ENCODE measurements at regions of chr1 and their contacts with region 1.

Region 1: GRCh38 chr1:9629445-9630201 is 21.9 kb upstream of the PIK3CD start:
- DNase-seq: peak; percentile 90
- ATAC-seq: peak; percentile 51
- H3K4me3 ChIP-seq: peak overlapping the region; percentile 51 to 85 (median 70)
- H3K4me3 Mint-ChIP-seq: peak overlapping the region; percentile 86
- H3K27ac ChIP-seq: peak overlapping the region; percentile 79 to 88
- H3K27ac Mint-ChIP-seq: peak overlapping the region; percentile 97
- H3K4me1 ChIP-seq: peaks cover 37 to 70% of the 10 kb centered on the region in 2 donors
- H3K4me1 Mint-ChIP-seq: peaks cover 69% of the 10 kb centered on the region
- H3K27me3 ChIP-seq: no peaks in the 10 kb centered on the region
- H3K27me3 Mint-ChIP-seq: no peaks in the 10 kb centered on the region
- CTCF ChIP-seq: no peak

Region 2: GRCh38 chr1:9486466-9487140 is 143.0 kb before region 1 on chr1:
- CTCF ChIA-PET with region 1: no interaction called
- POLR2A ChIA-PET with region 1: no interaction called
- intact Hi-C with region 1: no loop called
- DNase-seq: no peak
- ATAC-seq: no peak
- H3K4me3 ChIP-seq: no peak overlapping the region
- H3K4me3 Mint-ChIP-seq: no peak overlapping the region
- H3K27ac ChIP-seq: no peak overlapping the region
- H3K27ac Mint-ChIP-seq: no peak overlapping the region
- H3K4me1 ChIP-seq: no peaks in the 10 kb centered on the region
- H3K4me1 Mint-ChIP-seq: no peaks in the 10 kb centered on the region
- H3K27me3 ChIP-seq: peaks cover 0 to 9% (median 0%) of the 10 kb centered on the region in 4 experiments
- H3K27me3 Mint-ChIP-seq: peaks cover 22% of the 10 kb centered on the region
- CTCF ChIP-seq: no peak

Region 3: DNA sequence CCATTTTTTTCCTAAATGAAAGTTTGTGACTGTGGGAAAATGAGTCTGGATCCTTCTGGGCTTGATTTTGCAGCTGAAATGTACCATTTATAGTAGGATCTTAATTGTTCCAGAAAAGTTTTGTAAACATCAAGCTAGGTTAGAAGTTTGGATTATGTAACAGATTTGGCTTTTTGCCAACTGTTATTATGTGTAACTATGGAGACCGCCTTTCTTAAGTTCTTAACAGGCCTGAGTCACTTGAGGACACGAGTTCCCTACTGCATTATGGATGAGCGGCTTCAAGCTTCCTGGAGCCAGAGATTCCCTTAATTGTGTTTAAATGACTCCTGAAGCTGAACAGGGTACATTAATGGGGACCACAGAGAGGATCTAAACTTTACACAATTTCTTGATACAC is 68.2 kb before region 1 on chr1:
- CTCF ChIA-PET with region 1: no interaction called
- POLR2A ChIA-PET with region 1: no interaction called
- intact Hi-C with region 1: no loop called
- DNase-seq: no peak
- ATAC-seq: no peak
- H3K4me3 ChIP-seq: no peak overlapping the region
- H3K4me3 Mint-ChIP-seq: no peak overlapping the region
- H3K27ac ChIP-seq: no peak overlapping the region
- H3K27ac Mint-ChIP-seq: no peak overlapping the region
- H3K4me1 ChIP-seq: no peaks in the 10 kb centered on the region
- H3K4me1 Mint-ChIP-seq: peaks cover 6% of the 10 kb centered on the region
- H3K27me3 ChIP-seq: no peaks in the 10 kb centered on the region
- H3K27me3 Mint-ChIP-seq: no peaks in the 10 kb centered on the region
- CTCF ChIP-seq: no peak

Region 4: GRCh38 chr1:9588551-9589143 is 41.0 kb before region 1 on chr1 and contains the start of gene TMEM201:
- CTCF ChIA-PET with region 1: interaction called, 4 read pairs
- POLR2A ChIA-PET with region 1: interaction called, 5 read pairs
- intact Hi-C with region 1: loop called (anchors 2 kb)
- DNase-seq: peak; percentile 96
- ATAC-seq: peak; percentile 91
- H3K4me3 ChIP-seq: peak within 1 kb of the TSS; percentile 33 to 62 (median 58)
- H3K4me3 Mint-ChIP-seq: peak within 1 kb of the TSS; percentile 91
- H3K27ac ChIP-seq: peak within 1 kb of the TSS in 1 of 2 donors; percentile 6
- H3K27ac Mint-ChIP-seq: peak within 1 kb of the TSS; percentile 82
- H3K4me1 ChIP-seq: peaks cover 33 to 42% of the 10 kb centered on the region in 2 donors
- H3K4me1 Mint-ChIP-seq: peaks cover 38% of the 10 kb centered on the region
- H3K27me3 ChIP-seq: no peaks in the 10 kb centered on the region
- H3K27me3 Mint-ChIP-seq: no peaks in the 10 kb centered on the region
- CTCF ChIP-seq: peak; percentile 80
- total RNA-seq, gene TMEM201: 9.1 and 11.2 TPM in 2 replicates

Region 5: GRCh38 chr1:9651565-9652378 is 22.1 kb after region 1 on chr1 and contains the start of gene PIK3CD:
- CTCF ChIA-PET with region 1: interaction called, 231 read pairs
- POLR2A ChIA-PET with region 1: interaction called, 251 read pairs
- intact Hi-C with region 1: loop called (anchors 1 kb)
- DNase-seq: peak; percentile 68
- ATAC-seq: peak; percentile 22
- H3K4me3 ChIP-seq: peak within 1 kb of the TSS; percentile 57 to 96 (median 74)
- H3K4me3 Mint-ChIP-seq: peak within 1 kb of the TSS; percentile 98
- H3K27ac ChIP-seq: peak within 1 kb of the TSS; percentile 77 to 82
- H3K27ac Mint-ChIP-seq: peak within 1 kb of the TSS; percentile 99
- H3K4me1 ChIP-seq: peaks cover 39 to 57% of the 10 kb centered on the region in 2 donors
- H3K4me1 Mint-ChIP-seq: peaks cover 58% of the 10 kb centered on the region
- H3K27me3 ChIP-seq: no peaks in the 10 kb centered on the region
- H3K27me3 Mint-ChIP-seq: no peaks in the 10 kb centered on the region
- CTCF ChIP-seq: no peak
- total RNA-seq, gene PIK3CD: 222 and 223 TPM in 2 replicates

Region 6: GRCh38 chr1:9671377-9672140 is 41.9 kb after region 1 on chr1:
- CTCF ChIA-PET with region 1: interaction called, 29 read pairs
- POLR2A ChIA-PET with region 1: interaction called, 4 read pairs
- intact Hi-C with region 1: no loop called
- DNase-seq: no peak
- ATAC-seq: no peak
- H3K4me3 ChIP-seq: no peak overlapping the region
- H3K4me3 Mint-ChIP-seq: no peak overlapping the region
- H3K27ac ChIP-seq: peak overlapping the region in 1 of 2 donors; percentile 2
- H3K27ac Mint-ChIP-seq: peak overlapping the region; percentile 79
- H3K4me1 ChIP-seq: peaks cover 11 to 46% of the 10 kb centered on the region in 2 donors
- H3K4me1 Mint-ChIP-seq: peaks cover 46% of the 10 kb centered on the region
- H3K27me3 ChIP-seq: no peaks in the 10 kb centered on the region
- H3K27me3 Mint-ChIP-seq: no peaks in the 10 kb centered on the region
- CTCF ChIP-seq: no peak

Region 7: DNA sequence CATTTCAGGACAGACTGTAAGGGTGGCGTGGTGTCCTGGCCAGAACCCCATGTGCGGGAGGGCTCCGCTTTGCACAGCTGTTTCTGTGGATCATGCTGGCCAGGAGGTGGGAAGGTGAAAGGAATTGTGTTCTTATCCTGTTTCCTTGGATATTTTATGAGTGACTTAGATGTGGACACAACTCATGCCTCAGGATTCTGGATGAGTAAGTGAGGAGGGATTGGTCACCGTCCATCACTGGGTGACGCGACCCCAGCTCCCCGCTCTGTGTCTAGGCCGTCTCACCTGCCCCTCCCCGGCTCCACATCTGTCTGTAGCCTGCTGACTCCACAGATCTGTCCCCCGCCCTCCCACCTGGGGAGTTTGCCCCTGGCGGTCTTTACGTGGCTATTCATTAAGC is 70.7 kb after region 1 on chr1:
- CTCF ChIA-PET with region 1: interaction called, 119 read pairs
- POLR2A ChIA-PET with region 1: interaction called, 6 read pairs
- intact Hi-C with region 1: loop called (anchors 5 kb)
- DNase-seq: no peak
- ATAC-seq: no peak
- H3K4me3 ChIP-seq: no peak overlapping the region
- H3K4me3 Mint-ChIP-seq: no peak overlapping the region
- H3K27ac ChIP-seq: peak overlapping the region in 1 of 2 donors; percentile 48
- H3K27ac Mint-ChIP-seq: peak overlapping the region; percentile 46
- H3K4me1 ChIP-seq: peaks cover 38 to 50% of the 10 kb centered on the region in 2 donors
- H3K4me1 Mint-ChIP-seq: peaks cover 57% of the 10 kb centered on the region
- H3K27me3 ChIP-seq: no peaks in the 10 kb centered on the region
- H3K27me3 Mint-ChIP-seq: no peaks in the 10 kb centered on the region
- CTCF ChIP-seq: no peak

Region 8: DNA sequence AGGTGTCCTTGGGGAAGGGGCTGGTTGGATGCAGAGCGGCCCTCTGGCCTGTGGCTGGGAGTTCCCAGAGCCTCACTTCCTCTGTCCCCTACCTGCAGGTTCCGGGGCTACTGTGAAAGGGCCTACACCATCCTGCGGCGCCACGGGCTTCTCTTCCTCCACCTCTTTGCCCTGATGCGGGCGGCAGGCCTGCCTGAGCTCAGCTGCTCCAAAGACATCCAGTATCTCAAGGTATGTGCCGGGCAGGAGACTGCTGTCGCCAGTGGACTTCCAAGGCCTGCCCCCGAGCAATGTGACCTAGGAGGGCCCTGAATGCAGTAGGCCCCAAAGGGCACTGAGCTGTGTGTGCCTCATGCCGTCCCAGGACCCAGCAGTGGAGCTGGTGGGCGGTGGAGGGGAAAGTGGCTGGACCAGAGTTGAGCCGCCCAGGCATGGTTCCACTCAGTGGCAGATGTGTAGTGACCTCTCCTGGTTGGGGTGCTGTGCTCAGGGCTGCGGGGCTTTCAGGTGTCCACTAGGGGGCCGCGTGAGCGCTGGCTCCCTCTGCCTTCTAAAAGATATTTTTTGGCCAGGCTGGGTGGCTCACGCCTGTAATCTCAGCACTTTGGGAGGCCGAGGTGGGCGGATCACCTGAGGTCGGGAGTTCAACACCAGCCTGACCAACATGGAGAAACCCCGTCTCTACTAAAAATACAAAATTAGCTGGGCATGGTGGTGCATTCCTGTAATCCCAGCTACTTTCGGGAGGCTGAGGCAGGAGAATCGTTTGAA is 95.3 kb after region 1 on chr1:
- CTCF ChIA-PET with region 1: interaction called, 147 read pairs
- POLR2A ChIA-PET with region 1: interaction called, 5 read pairs
- intact Hi-C with region 1: loop called (anchors 1 kb)
- DNase-seq: peak; percentile 79
- ATAC-seq: peak; percentile 77
- H3K4me3 ChIP-seq: no peak overlapping the region
- H3K4me3 Mint-ChIP-seq: no peak overlapping the region
- H3K27ac ChIP-seq: peak overlapping the region in 1 of 2 donors; percentile 18
- H3K27ac Mint-ChIP-seq: peak overlapping the region; percentile 77
- H3K4me1 ChIP-seq: peaks cover 8 to 26% of the 10 kb centered on the region in 2 donors
- H3K4me1 Mint-ChIP-seq: peaks cover 17% of the 10 kb centered on the region
- H3K27me3 ChIP-seq: no peaks in the 10 kb centered on the region
- H3K27me3 Mint-ChIP-seq: no peaks in the 10 kb centered on the region
- CTCF ChIP-seq: peak; percentile 88